ENCODE measurements at regions of chr5 and their contacts with region 1.

Region 1: GRCh38 chr5:168579488-168580226 is 489 bp upstream of the PANK3 start:
- H3K4me3 Mint-ChIP-seq: peak overlapping the region; percentile 86
- H3K27ac Mint-ChIP-seq: peak overlapping the region; percentile 99
- H3K4me1 Mint-ChIP-seq: peaks cover 52% of the 10 kb centered on the region
- H3K27me3 Mint-ChIP-seq: no peaks in the 10 kb centered on the region

Region 2: GRCh38 chr5:168486136-168486879 is 93.3 kb before region 1 on chr5 and contains the start of gene RARS1:
- intact Hi-C with region 1: loop called (anchors 1 kb)
- H3K4me3 Mint-ChIP-seq: peak within 1 kb of the TSS; percentile 95
- H3K27ac Mint-ChIP-seq: peak within 1 kb of the TSS; percentile 86
- H3K4me1 Mint-ChIP-seq: peaks cover 15% of the 10 kb centered on the region
- H3K27me3 Mint-ChIP-seq: peaks cover 13% of the 10 kb centered on the region